ENCODE measurements at regions of chr2 and their contacts with region 1.

Region 1: GRCh38 chr2:238509151-238509835 is 82.6 kb downstream of the ASB1 start:
- DNase-seq: peak in 1 of 2 experiments; percentile 7
- H3K4me3 ChIP-seq: no peak overlapping the region
- H3K4me3 Mint-ChIP-seq: no peak overlapping the region
- H3K27ac Mint-ChIP-seq: no peak overlapping the region
- H3K4me1 ChIP-seq: no peaks in the 10 kb centered on the region
- H3K4me1 Mint-ChIP-seq: no peaks in the 10 kb centered on the region
- H3K27me3 ChIP-seq: no peaks in the 10 kb centered on the region
- H3K27me3 Mint-ChIP-seq: no peaks in the 10 kb centered on the region
- CTCF ChIP-seq: no peak

Region 2: GRCh38 chr2:238667008-238667407 is 157.7 kb after region 1 on chr2:
- CTCF ChIA-PET with region 1: no interaction called
- POLR2A ChIA-PET with region 1: no interaction called
- intact Hi-C with region 1: no loop called
- DNase-seq: no peak
- H3K4me3 ChIP-seq: no peak overlapping the region
- H3K4me3 Mint-ChIP-seq: no peak overlapping the region
- H3K27ac Mint-ChIP-seq: no peak overlapping the region
- H3K4me1 ChIP-seq: no peaks in the 10 kb centered on the region
- H3K4me1 Mint-ChIP-seq: no peaks in the 10 kb centered on the region
- H3K27me3 ChIP-seq: no peaks in the 10 kb centered on the region
- H3K27me3 Mint-ChIP-seq: peaks cover 11% of the 10 kb centered on the region
- CTCF ChIP-seq: no peak

Region 3: GRCh38 chr2:238784671-238785527 is 275.6 kb after region 1 on chr2:
- CTCF ChIA-PET with region 1: no interaction called
- POLR2A ChIA-PET with region 1: no interaction called
- intact Hi-C with region 1: loop called (anchors 5 kb)
- DNase-seq: peak; percentile 46 to 47
- H3K4me3 ChIP-seq: no peak overlapping the region
- H3K4me3 Mint-ChIP-seq: no peak overlapping the region
- H3K27ac Mint-ChIP-seq: no peak overlapping the region
- H3K4me1 ChIP-seq: no peaks in the 10 kb centered on the region
- H3K4me1 Mint-ChIP-seq: no peaks in the 10 kb centered on the region
- H3K27me3 ChIP-seq: no peaks in the 10 kb centered on the region
- H3K27me3 Mint-ChIP-seq: peaks cover 4% of the 10 kb centered on the region
- CTCF ChIP-seq: peak; percentile 63 to 73